Endothelial cell of umbilical vein (primary cell): ENCODE measurements at regions of chr15 and their contacts with region 1.

Region 1: DNA sequence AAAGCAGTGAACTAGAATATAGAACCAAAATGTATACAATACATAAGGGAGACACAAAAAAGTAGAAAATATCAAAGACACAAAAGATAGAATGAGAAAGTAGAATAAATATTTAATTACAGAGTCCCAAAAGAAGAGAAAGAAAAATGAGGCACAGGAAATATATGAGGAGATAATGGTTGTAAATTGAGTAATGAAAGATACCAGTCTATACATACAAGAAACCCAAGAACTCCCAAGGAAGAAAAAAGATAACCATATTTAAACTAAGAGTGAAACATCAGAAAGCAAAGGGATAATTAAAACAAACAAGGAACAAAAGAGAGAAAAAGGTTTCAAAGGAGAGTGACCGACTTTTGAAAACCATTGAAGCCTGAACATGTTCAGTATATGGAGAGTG is 47.3 kb downstream of the CPEB1 start:
- DNase-seq: no peak
- H3K4me3 ChIP-seq: no peak overlapping the region
- H3K27ac ChIP-seq: no peak overlapping the region
- H3K4me1 ChIP-seq: no peaks in the 10 kb centered on the region
- H3K27me3 ChIP-seq: no peaks in the 10 kb centered on the region
- CTCF ChIP-seq: no peak
- POLR2A ChIP-seq: no peak

Region 2: DNA sequence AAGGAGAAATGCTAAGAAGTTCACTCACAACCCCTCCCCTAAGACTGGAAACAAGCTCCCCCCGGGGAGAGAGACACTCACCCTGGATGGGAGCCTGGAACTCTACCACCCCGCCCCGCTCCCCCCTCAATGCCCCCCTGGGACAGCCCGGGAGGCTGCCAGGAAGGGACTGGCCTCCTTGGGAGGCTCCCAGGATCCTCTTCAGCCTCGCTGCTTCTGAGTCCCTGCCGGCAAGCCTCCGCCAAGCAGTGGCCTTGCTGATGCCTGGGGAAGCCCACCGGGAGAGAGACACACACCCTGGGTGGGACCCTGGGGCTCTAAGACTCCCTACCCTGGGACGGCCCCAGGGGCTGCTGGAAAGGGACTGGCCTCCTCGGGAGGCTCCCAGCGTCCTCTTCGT is 13.9 kb after region 1 on chr15:
- CTCF ChIA-PET with region 1: no interaction called
- POLR2A ChIA-PET with region 1: no interaction called
- dilution Hi-C with region 1: no loop called
- intact Hi-C with region 1: loop called (anchors 1 kb)
- DNase-seq: no peak
- H3K4me3 ChIP-seq: no peak overlapping the region
- H3K27ac ChIP-seq: no peak overlapping the region
- H3K4me1 ChIP-seq: no peaks in the 10 kb centered on the region
- H3K27me3 ChIP-seq: no peaks in the 10 kb centered on the region
- CTCF ChIP-seq: no peak
- POLR2A ChIP-seq: no peak